Transverse colon (tissue), 4 donors: ENCODE measurements at regions of chr10 and their contacts with region 1.

Region 1: DNA sequence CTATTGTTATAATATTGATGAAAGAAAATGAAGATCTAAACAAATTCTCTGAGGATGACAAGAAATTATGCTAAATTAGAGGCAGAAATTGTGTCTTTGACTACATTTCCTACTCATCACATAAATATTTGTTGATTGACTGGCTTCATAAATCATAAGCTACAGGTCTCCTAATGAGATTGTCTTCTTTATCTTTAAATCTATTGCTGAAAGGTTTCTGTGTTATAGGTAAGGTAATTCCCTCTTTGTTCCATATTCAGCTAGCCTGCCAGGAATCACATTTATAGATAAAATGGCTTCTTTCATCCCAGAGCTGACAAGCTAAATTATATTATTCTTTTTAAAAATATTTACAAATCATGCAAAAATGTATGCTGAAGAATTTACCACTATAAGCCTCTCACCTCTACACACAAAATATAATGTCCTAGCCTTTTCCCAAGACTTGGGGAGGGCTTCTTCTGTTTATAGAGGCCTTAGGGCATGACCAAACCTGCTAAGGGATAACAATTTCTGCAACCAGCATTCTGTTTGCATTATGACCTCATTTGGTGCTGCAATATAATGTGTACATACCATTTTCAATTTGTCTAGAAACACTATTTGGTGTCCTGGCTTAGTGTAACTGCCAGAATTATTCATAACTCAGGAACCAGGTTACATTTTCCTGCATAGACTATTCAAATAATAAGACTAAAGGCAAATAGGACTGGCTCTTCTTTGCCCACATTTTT is 446.4 kb upstream of the SORCS1 start:
- DNase-seq: no peak
- H3K4me3 ChIP-seq: no peak overlapping the region
- H3K27ac ChIP-seq: no peak overlapping the region
- H3K4me1 ChIP-seq: no peaks in the 10 kb centered on the region
- H3K27me3 ChIP-seq: no peaks in the 10 kb centered on the region
- CTCF ChIP-seq: no peak
- EP300 ChIP-seq: no peak
- POLR2A ChIP-seq: no peak

Region 2: GRCh38 chr10:106506509-106507265 is 1104.3 kb before region 1 on chr10:
- in situ Hi-C with region 1: no loop called
- intact Hi-C with region 1: loop called (anchors 5 kb)
- DNase-seq: no peak
- H3K4me3 ChIP-seq: no peak overlapping the region
- H3K27ac ChIP-seq: no peak overlapping the region
- H3K4me1 ChIP-seq: no peaks in the 10 kb centered on the region
- H3K27me3 ChIP-seq: no peaks in the 10 kb centered on the region
- CTCF ChIP-seq: no peak
- EP300 ChIP-seq: no peak
- POLR2A ChIP-seq: no peak